CD4-positive, alpha-beta T cell (primary cell): ENCODE measurements at regions of chr20 and their contacts with region 1.

Region 1: GRCh38 chr20:4613718-4614620 is 107.7 kb upstream of the PRND start:
- DNase-seq: peak; percentile 49 to 81 (median 64)
- ATAC-seq: peak; percentile 79
- H3K4me3 ChIP-seq: no peak overlapping the region
- H3K4me3 Mint-ChIP-seq: no peak overlapping the region
- H3K27ac ChIP-seq: no peak overlapping the region
- H3K27ac Mint-ChIP-seq: no peak overlapping the region
- H3K4me1 ChIP-seq: peaks cover 8% of the 10 kb centered on the region
- H3K4me1 Mint-ChIP-seq: peaks cover 6% of the 10 kb centered on the region
- H3K27me3 ChIP-seq: no peaks in the 10 kb centered on the region
- H3K27me3 Mint-ChIP-seq: no peaks in the 10 kb centered on the region
- CTCF ChIP-seq: peak; percentile 43

Region 2: DNA sequence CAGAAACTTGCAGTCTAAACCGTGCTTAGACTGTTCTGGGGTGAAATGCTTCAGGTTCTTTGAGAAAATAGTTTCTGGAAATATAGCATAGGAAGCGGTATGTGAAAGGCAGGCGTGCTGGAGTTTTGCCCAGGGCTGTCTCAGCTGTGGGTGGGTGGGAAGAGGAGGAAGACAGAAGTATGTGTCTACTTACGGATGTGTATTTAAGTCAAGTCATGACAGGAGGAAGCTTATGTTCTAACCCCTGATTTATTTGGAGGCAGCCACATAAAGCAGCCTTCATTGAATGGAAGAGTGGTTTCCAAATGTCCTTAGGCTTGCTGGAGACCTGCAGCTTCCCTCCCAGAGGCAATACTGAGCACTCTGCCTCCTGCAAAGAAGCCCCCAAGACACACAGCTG is 238.1 kb before region 1 on chr20:
- CTCF ChIA-PET with region 1: no interaction called
- POLR2A ChIA-PET with region 1: no interaction called
- intact Hi-C with region 1: no loop called
- DNase-seq: no peak
- ATAC-seq: no peak
- H3K4me3 ChIP-seq: no peak overlapping the region
- H3K4me3 Mint-ChIP-seq: no peak overlapping the region
- H3K27ac ChIP-seq: no peak overlapping the region
- H3K27ac Mint-ChIP-seq: no peak overlapping the region
- H3K4me1 ChIP-seq: no peaks in the 10 kb centered on the region
- H3K4me1 Mint-ChIP-seq: no peaks in the 10 kb centered on the region
- H3K27me3 ChIP-seq: no peaks in the 10 kb centered on the region
- H3K27me3 Mint-ChIP-seq: peaks cover 21% of the 10 kb centered on the region
- CTCF ChIP-seq: no peak

Region 3: GRCh38 chr20:4720041-4720976 is 106.3 kb after region 1 on chr20:
- CTCF ChIA-PET with region 1: interaction called, 10 read pairs
- POLR2A ChIA-PET with region 1: interaction called, 3 read pairs
- intact Hi-C with region 1: loop called in 1 of 2 experiments (anchors 1 kb)
- DNase-seq: peak; percentile 60 to 88 (median 70)
- ATAC-seq: peak; percentile 95
- H3K4me3 ChIP-seq: no peak overlapping the region
- H3K4me3 Mint-ChIP-seq: no peak overlapping the region
- H3K27ac ChIP-seq: no peak overlapping the region
- H3K27ac Mint-ChIP-seq: peak overlapping the region; percentile 50
- H3K4me1 ChIP-seq: peaks cover 6% of the 10 kb centered on the region
- H3K4me1 Mint-ChIP-seq: peaks cover 12% of the 10 kb centered on the region
- H3K27me3 ChIP-seq: no peaks in the 10 kb centered on the region
- H3K27me3 Mint-ChIP-seq: no peaks in the 10 kb centered on the region
- CTCF ChIP-seq: peak; percentile 82